Transverse colon (tissue), 4 donors: ENCODE measurements at regions of chr2 and their contacts with region 1.

Region 1: GRCh38 chr2:173210270-173211196 is 134.9 kb downstream of the MAP3K20 start:
- DNase-seq: peak; percentile 63
- H3K4me3 ChIP-seq: no peak overlapping the region
- H3K27ac ChIP-seq: peak overlapping the region; percentile 65 to 85 (median 68)
- H3K4me1 ChIP-seq: peaks cover 0 to 34% (median 13%) of the 10 kb centered on the region in 4 donors
- H3K27me3 ChIP-seq: no peaks in the 10 kb centered on the region
- CTCF ChIP-seq: peak; percentile 80 to 92 (median 83)
- EP300 ChIP-seq: no peak
- POLR2A ChIP-seq: no peak

Region 2: DNA sequence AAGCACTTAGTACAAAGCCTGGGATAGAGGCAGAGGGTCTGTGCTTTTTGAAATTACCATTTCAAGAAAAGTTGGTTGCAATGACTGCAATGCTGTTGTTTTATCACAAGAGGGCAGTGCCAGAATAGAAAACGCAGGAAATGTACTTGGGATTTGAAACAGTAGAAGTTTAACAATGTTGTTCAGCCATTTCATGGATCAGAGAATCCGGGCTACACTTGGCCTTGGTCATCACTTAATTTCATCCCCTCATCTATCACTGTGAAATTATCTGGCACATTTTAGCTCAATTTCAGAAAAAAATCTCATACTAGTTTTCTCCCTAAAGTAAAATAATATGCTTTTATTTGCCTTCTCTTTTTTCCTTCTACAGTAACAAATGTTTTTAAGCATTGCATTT is 404.0 kb before region 1 on chr2:
- in situ Hi-C with region 1: loop called in 1 of 4 experiments (anchors 25 kb)
- intact Hi-C with region 1: no loop called
- DNase-seq: no peak
- H3K4me3 ChIP-seq: no peak overlapping the region
- H3K27ac ChIP-seq: no peak overlapping the region
- H3K4me1 ChIP-seq: peaks cover 0 to 7% (median 6%) of the 10 kb centered on the region in 4 donors
- H3K27me3 ChIP-seq: peaks cover 11% of the 10 kb centered on the region
- CTCF ChIP-seq: peak; percentile 62 to 79 (median 73)
- EP300 ChIP-seq: no peak
- POLR2A ChIP-seq: no peak

Region 3: GRCh38 chr2:173027181-173028128 is 183.1 kb before region 1 on chr2:
- in situ Hi-C with region 1: loop called (anchors 5 to 10 kb)
- intact Hi-C with region 1: loop called (anchors 5 kb)
- DNase-seq: peak; percentile 88
- H3K4me3 ChIP-seq: no peak overlapping the region
- H3K27ac ChIP-seq: peak overlapping the region; percentile 60 to 68 (median 66)
- H3K4me1 ChIP-seq: peaks cover 12 to 28% (median 17%) of the 10 kb centered on the region in 4 donors
- H3K27me3 ChIP-seq: no peaks in the 10 kb centered on the region
- CTCF ChIP-seq: peak; percentile 92 to 96 (median 94)
- EP300 ChIP-seq: no peak
- POLR2A ChIP-seq: no peak

Region 4: GRCh38 chr2:173037245-173038120 is 173.1 kb before region 1 on chr2:
- in situ Hi-C with region 1: loop called in 1 of 4 experiments (anchors 10 kb)
- intact Hi-C with region 1: no loop called
- DNase-seq: no peak
- H3K4me3 ChIP-seq: no peak overlapping the region
- H3K27ac ChIP-seq: peak overlapping the region in 1 of 4 donors; percentile 29
- H3K4me1 ChIP-seq: peaks cover 0 to 16% (median 9%) of the 10 kb centered on the region in 4 donors
- H3K27me3 ChIP-seq: no peaks in the 10 kb centered on the region
- CTCF ChIP-seq: no peak
- EP300 ChIP-seq: no peak
- POLR2A ChIP-seq: no peak

Region 5: GRCh38 chr2:173075781-173076580 is 134.6 kb before region 1 on chr2 and contains the start of gene MAP3K20:
- in situ Hi-C with region 1: no loop called
- intact Hi-C with region 1: loop called (anchors 2 kb)
- DNase-seq: peak; percentile 70
- H3K4me3 ChIP-seq: peak within 1 kb of the TSS; percentile 61 to 87 (median 72)
- H3K27ac ChIP-seq: peak within 1 kb of the TSS; percentile 88 to 96 (median 92)
- H3K4me1 ChIP-seq: peaks cover 0 to 26% (median 14%) of the 10 kb centered on the region in 4 donors
- H3K27me3 ChIP-seq: peaks cover 3% of the 10 kb centered on the region
- CTCF ChIP-seq: peak in 4 of 5 experiments; percentile 18 to 34 (median 28)
- EP300 ChIP-seq: no peak
- POLR2A ChIP-seq: no peak
- total RNA-seq, gene MAP3K20: 24.7 to 40.2 (median 33.8) TPM

Region 6: GRCh38 chr2:173159794-173160463 is 50.6 kb before region 1 on chr2:
- in situ Hi-C with region 1: no loop called
- intact Hi-C with region 1: no loop called
- DNase-seq: peak; percentile 74
- H3K4me3 ChIP-seq: no peak overlapping the region
- H3K27ac ChIP-seq: peak overlapping the region; percentile 40 to 73 (median 68)
- H3K4me1 ChIP-seq: peaks cover 0 to 22% (median 2%) of the 10 kb centered on the region in 4 donors
- H3K27me3 ChIP-seq: no peaks in the 10 kb centered on the region
- CTCF ChIP-seq: no peak
- EP300 ChIP-seq: peak; percentile 95
- POLR2A ChIP-seq: no peak